ENCODE measurements at regions of chr15 and their contacts with region 1.

Region 1: DNA sequence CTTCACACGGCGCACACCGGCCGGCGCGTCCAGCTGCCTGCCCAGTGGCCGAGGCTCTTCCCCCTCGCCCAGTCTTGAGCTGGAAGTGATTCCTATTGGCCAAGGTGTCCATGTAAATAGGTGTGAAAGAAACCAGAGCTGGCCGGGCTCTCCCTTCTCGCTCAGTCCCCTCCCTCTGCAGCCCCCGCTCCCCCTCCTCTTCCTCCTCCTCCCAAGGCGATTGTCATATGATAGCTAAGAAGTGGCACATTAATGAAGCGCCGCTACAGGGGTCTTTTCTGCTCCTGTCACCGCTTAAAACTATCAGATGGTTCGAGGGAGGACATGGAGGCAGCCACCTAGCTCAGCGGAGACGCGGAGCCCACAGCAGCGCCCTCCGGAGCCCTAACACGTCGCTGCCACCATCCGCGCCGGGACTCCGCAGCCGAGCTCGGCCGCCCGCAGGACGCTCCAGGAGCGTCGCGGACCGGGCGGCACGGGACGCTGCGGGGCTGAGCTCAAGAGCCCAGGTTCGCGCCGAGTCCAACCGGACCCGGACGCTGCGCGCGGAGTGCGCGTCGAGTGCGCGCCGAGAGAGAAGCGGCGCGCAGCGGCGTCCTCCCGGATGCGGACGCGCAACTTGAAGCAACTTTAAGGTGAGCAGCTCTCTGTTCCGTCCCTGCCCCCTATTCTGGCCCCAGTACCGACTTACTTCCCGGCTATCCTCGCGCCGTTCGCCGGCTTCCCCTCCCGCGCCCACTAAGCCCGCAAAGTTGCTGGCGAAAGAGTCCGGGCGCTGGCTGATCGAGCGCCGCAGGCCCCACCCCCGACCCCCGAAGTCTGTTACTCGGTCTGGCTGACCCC is at the start of gene FOXB1:
- H3K4me3 ChIP-seq: peak within 1 kb of the TSS; percentile 54
- H3K27ac ChIP-seq: peak within 1 kb of the TSS; percentile 99
- H3K4me1 ChIP-seq: peaks cover 25% of the 10 kb centered on the region
- CTCF ChIP-seq: peak; percentile 69; the same call in 1 of the 2 replicates

Region 2: DNA sequence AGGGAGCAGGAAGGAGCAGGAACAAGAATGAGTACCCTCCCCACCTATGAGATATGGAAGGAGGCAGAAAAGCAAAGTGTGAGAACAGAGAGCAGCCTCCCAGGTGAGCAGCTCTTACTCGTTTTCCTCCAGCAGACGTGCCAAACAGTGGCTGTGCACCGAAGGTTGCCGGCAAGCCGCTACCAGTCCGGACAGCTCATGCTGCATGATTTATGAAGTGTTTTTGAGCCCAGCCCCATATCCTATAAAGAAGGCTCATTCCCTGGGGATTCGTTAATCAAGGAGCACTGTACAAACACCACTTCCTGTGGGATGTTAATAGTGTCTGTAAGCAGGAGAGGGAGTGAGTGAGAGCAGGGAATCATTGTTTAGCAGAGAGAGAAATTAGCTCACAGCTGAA is 118.4 kb before region 1 on chr15:
- CTCF ChIA-PET with region 1: no interaction called
- POLR2A ChIA-PET with region 1: no interaction called
- H3K4me3 ChIP-seq: peak overlapping the region; percentile 5; the same call in 1 of the 2 replicates
- H3K27ac ChIP-seq: peak overlapping the region; percentile 72
- H3K4me1 ChIP-seq: peaks cover 11% of the 10 kb centered on the region
- CTCF ChIP-seq: no peak

Region 3: GRCh38 chr15:59953392-59953883 is 50.8 kb before region 1 on chr15:
- CTCF ChIA-PET with region 1: interaction called, 3 read pairs
- POLR2A ChIA-PET with region 1: interaction called, 10 read pairs
- H3K4me3 ChIP-seq: no peak overlapping the region
- H3K27ac ChIP-seq: peak overlapping the region; percentile 83
- H3K4me1 ChIP-seq: peaks cover 8% of the 10 kb centered on the region
- CTCF ChIP-seq: no peak